ENCODE measurements at regions of chr4 and their contacts with region 1.

Region 1: GRCh38 chr4:15396157-15396800 is 31.6 kb upstream of the C1QTNF7 start:
- DNase-seq: peak; percentile 32
- H3K4me3 Mint-ChIP-seq: no peak overlapping the region
- H3K27ac Mint-ChIP-seq: no peak overlapping the region
- H3K4me1 Mint-ChIP-seq: peaks cover 9% of the 10 kb centered on the region
- H3K27me3 Mint-ChIP-seq: no peaks in the 10 kb centered on the region

Region 2: DNA sequence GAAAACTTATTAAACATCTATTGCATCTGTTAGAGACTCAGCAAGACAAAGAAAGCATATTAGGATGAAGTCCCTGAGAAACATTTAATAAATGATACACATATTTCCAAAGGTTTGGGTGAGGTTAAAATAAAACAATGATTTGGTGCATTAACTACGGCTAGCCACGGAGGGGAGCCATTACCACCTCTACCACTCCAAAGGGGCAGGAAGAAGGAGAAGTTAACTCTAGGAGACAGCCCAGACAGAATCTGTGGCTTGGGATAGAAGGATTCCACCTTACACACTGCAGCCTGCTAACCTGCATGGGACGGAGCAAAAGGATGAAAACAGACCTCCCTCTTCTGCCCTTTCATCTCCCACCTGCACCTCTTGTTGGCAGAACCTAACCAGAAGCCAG is 157.6 kb before region 1 on chr4:
- intact Hi-C with region 1: loop called (anchors 1 kb)
- DNase-seq: no peak
- H3K4me3 Mint-ChIP-seq: no peak overlapping the region
- H3K27ac Mint-ChIP-seq: no peak overlapping the region
- H3K4me1 Mint-ChIP-seq: peaks cover 19% of the 10 kb centered on the region
- H3K27me3 Mint-ChIP-seq: no peaks in the 10 kb centered on the region

Region 3: GRCh38 chr4:15425520-15425919 is 29.2 kb after region 1 on chr4:
- intact Hi-C with region 1: loop called (anchors 2 kb)
- DNase-seq: no peak
- H3K4me3 Mint-ChIP-seq: no peak overlapping the region
- H3K27ac Mint-ChIP-seq: no peak overlapping the region
- H3K4me1 Mint-ChIP-seq: peaks cover 28% of the 10 kb centered on the region
- H3K27me3 Mint-ChIP-seq: no peaks in the 10 kb centered on the region

Region 4: DNA sequence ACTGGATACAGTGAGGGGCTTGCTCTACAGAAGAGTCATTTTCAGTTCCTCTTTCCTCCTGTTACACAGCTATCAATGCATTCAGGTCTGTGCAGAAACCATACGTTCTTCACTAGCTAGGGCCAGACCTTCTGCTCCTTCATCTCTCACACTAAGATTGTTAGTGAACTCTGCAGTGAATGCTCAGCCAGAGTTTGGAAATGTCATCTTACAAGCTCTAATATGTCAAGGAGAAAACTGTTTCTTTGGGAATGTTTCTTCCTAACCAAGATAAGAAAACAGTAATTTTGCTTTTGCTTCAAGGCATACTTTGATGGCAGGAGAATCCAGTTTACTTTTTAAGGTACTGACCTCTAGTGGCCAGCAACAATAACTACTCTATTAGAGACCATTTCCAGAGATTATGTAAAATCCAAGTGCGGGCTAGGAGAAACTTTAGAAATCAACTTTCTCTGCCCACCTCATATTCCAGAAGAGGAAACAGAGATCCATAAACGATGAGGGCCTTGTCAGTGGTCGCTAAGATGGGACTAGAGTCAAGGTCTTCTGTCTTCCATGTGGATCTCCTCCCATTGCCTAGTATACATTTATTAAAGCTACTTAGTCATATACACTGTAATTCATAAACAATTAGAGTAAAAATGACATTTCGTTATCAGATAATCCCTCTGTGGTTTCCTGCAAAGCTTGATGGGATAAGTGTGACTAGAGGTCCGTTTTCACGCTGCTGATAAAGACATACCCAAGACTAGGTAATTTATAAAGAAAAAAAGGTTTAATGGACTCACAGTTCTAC is 61.3 kb after region 1 on chr4:
- intact Hi-C with region 1: loop called (anchors 1 kb)
- DNase-seq: no peak
- H3K4me3 Mint-ChIP-seq: no peak overlapping the region
- H3K27ac Mint-ChIP-seq: no peak overlapping the region
- H3K4me1 Mint-ChIP-seq: no peaks in the 10 kb centered on the region
- H3K27me3 Mint-ChIP-seq: peaks cover 7% of the 10 kb centered on the region